ENCODE measurements at regions of chr11 and their contacts with region 1.

Region 1: DNA sequence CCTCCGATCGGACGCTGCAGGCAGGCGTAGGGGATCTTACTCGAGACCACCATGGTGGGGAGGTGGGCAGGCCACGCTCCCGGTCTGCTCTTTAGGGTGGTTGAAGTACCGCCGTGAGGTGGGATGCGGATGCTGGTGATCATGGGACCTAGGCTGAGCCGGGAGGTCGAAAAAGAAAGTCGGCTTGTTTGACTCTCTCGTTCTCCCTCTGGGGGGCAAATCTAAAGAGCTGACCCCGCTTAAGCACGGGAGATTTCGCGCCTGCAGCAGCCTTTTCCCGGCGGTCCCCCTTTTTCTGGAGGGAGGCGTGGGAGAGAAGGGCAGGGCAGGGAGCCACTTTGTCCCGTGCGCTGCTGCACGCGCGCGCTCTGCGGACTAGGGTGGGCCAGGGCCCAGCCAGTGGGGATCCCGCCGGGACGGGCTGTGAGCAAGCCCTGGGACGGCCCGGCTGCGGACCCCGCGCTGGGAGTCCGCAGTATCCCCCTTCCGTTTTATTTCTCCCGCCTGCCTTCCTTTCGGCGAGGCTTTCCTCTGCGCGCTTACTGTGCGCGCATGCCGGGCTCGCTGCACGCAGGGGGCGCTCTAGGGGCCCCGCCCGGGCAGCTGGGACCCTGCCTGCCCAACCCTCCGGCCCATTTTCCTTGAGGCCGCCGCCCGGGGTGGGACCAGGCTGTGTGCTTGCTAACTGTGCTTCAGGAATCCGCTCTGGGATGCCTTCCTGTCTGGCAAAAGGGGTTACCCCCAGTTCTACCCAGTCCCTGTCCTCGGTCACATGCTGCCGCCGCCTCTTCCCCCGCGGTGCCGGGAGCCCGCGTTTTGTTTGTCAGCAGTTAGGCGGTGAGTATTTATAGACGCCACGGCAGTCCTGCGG is 81.0 kb downstream of the PRR5L start:
- H3K4me3 Mint-ChIP-seq: peak overlapping the region; percentile 76
- H3K27ac Mint-ChIP-seq: peak overlapping the region; percentile 69
- H3K4me1 Mint-ChIP-seq: peaks cover 42% of the 10 kb centered on the region
- H3K27me3 Mint-ChIP-seq: peaks cover 71% of the 10 kb centered on the region

Region 2: DNA sequence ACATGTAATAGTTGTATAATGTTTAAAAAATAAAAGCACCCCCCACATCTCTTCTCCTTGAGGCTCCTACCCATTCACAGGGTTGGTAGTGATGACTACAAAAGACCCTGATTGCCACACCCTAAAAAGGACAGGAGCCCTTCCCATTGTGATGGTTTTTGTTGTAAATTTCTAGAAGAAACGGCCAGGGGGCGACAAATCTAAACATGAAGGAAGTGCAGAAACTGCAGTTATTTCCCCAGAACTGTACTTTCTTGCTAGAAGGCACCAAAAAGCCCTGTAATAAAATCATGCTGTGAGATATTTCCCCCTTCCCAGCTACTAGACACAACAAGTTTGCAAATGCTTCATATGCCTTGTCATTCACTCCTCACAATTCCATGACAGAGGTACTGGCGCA is 70.2 kb before region 1 on chr11:
- intact Hi-C with region 1: loop called (anchors 10 kb)
- H3K4me3 Mint-ChIP-seq: no peak overlapping the region
- H3K27ac Mint-ChIP-seq: no peak overlapping the region
- H3K4me1 Mint-ChIP-seq: peaks cover 5% of the 10 kb centered on the region
- H3K27me3 Mint-ChIP-seq: peaks cover 8% of the 10 kb centered on the region

Region 3: DNA sequence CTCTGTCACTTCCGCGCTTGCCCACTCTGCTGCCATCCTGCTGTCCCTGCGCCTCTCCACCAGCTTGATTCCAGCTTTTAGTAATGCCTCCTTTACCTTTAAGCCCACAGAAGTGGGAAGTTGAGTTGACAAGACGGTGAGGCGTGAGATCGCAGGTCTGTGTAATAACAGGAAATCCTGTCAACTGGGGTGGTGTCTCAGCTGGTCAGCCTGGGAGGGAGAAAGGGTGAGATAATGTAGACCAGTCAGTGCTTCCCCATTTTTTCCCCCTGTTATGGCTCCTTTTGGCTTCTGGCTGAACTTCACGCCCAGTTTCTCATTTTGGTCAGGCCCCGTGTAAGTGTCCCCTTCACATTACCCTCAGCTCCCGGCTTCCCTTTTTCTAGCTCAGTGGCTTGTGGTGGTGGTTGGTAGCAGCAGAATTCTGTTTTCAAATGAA is 34.1 kb after region 1 on chr11:
- intact Hi-C with region 1: loop called (anchors 5 kb)
- H3K4me3 Mint-ChIP-seq: peak overlapping the region; percentile 14
- H3K27ac Mint-ChIP-seq: peak overlapping the region; percentile 73
- H3K4me1 Mint-ChIP-seq: peaks cover 69% of the 10 kb centered on the region
- H3K27me3 Mint-ChIP-seq: peaks cover 32% of the 10 kb centered on the region

Region 4: GRCh38 chr11:36425561-36426081 is 48.5 kb after region 1 on chr11:
- intact Hi-C with region 1: loop called (anchors 5 kb)
- H3K4me3 Mint-ChIP-seq: no peak overlapping the region
- H3K27ac Mint-ChIP-seq: peak overlapping the region; percentile 65
- H3K4me1 Mint-ChIP-seq: peaks cover 58% of the 10 kb centered on the region
- H3K27me3 Mint-ChIP-seq: peaks cover 19% of the 10 kb centered on the region

Region 5: DNA sequence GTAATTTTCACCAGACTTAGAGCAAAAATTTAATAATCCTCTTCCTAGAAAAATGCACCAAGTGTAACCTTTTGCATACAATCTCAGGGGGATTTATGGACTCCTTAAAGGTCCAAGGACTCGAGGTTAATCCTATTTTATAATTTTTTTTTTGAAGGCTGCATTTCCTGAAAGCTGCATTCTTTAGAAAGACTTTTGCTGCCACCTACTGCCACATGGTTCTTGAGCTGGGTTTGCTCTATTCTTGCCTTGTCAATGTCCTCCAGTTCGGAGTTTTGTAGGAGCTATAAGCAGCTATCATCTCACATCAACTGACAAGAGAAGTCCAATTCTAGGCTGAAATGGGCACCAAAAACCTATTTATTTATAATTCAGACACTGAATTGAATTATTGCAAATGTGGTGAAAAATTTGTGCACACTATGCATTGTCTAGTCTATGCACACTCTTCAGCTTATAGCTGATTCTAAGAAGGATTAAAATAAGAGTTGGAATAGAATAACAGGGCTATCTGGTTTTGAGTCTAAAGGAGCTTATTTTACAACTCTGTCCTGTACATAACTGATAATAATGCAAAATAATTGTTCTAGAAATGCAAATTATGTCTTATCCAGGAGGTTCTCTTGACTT is 101.7 kb after region 1 on chr11:
- intact Hi-C with region 1: loop called (anchors 5 kb)
- H3K4me3 Mint-ChIP-seq: no peak overlapping the region
- H3K27ac Mint-ChIP-seq: no peak overlapping the region
- H3K4me1 Mint-ChIP-seq: no peaks in the 10 kb centered on the region
- H3K27me3 Mint-ChIP-seq: no peaks in the 10 kb centered on the region